ENCODE measurements at regions of chr10 and their contacts with region 1.

Region 1: DNA sequence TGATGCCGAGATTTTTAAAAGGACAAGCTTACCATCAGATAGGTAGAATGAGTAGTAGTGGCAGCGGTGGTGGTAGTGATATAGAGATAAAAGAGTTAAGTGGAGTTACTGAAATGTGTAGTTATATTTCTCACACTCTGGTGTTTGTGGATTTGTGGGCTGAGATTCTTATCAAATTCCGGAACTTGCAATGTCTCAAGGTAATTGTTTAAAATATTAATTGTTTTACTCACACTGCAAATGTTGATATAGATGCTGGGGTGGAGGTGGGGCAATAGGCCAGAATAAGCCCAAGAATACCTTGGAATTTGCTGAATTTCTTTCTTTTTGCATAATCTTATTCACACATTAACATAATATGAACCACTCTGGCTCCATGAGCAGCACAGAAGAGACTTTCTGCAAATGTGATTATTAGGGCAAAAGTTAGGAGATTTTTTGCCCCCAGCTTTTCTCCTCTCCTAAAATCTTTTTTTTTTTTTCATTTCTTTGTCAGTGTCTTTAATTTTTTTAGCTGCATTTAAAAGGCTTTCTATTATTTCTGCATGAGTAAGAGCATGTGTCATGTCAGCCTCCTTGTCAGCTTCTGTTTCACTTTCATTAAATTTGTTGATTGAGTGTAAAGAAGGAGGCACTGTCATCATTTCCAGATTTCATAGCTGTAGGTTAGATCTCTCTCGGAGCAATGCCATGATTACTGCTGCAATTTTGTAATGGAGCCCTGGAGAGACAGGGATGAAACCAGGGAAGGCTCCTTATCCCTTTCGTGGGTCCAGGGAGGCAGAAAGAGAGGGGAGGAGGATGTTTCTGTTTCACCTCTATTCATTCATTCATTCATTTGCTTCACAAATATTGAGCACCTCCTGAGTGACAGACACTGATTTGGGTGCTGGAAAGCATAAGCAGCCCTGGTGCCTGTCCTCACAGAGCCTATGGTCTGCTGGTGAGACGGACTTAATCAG is 13.1 kb upstream of the SGMS1 start:
- DNase-seq: peak; percentile 44
- H3K4me3 Mint-ChIP-seq: no peak overlapping the region
- H3K27ac Mint-ChIP-seq: peak overlapping the region; percentile 50
- H3K4me1 Mint-ChIP-seq: peaks cover 33% of the 10 kb centered on the region
- H3K27me3 Mint-ChIP-seq: peaks cover 34% of the 10 kb centered on the region

Region 2: DNA sequence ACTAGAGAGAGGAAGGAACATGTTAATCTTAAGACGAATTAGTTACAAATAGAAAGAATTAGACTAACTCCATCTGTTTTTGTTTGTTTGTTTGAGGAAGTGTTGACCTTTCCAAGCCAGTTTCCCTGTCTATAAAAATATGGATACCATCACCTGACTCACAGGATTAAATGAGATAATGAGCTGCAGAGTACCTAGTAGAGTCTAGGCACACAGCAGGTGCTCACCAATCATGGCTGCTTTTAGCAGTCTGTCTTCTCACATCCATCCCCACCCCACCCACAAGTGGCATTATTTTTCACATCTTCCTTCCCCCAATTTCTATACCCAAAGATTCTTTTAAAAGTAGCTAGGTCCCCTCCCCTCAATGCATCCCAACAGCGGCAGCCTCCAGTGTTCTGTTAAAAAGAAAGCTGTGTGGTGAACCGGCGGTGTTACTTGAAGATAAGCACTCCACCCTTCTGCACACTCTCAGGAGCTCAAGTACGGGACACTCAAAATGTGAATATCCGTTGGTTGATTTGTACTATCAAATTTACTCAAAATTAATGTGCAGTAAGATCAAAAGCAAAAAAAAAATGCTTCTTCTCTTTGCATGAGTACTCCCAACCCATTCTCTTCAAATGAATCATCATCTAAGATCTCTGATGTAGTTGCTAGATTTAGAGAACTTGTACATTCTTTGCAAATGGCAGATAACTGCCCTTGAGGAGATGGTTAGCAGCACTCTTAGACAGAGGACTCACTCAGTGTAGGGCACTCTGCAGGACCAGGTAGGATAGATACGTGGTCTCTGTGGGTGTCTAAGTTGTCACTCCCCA is 240.2 kb before region 1 on chr10:
- CTCF ChIA-PET with region 1: no interaction called
- POLR2A ChIA-PET with region 1: interaction called, 3 read pairs
- intact Hi-C with region 1: loop called (anchors 1 kb)
- DNase-seq: peak; percentile 51
- H3K4me3 Mint-ChIP-seq: peak overlapping the region; percentile 17
- H3K27ac Mint-ChIP-seq: peak overlapping the region; percentile 65
- H3K4me1 Mint-ChIP-seq: peaks cover 46% of the 10 kb centered on the region
- H3K27me3 Mint-ChIP-seq: no peaks in the 10 kb centered on the region

Region 3: GRCh38 chr10:50508315-50509051 is 128.4 kb before region 1 on chr10:
- CTCF ChIA-PET with region 1: interaction called, 3 read pairs
- POLR2A ChIA-PET with region 1: interaction called, 12 read pairs
- intact Hi-C with region 1: loop called (anchors 1 kb)
- DNase-seq: peak; percentile 79
- H3K4me3 Mint-ChIP-seq: no peak overlapping the region
- H3K27ac Mint-ChIP-seq: no peak overlapping the region
- H3K4me1 Mint-ChIP-seq: peaks cover 68% of the 10 kb centered on the region
- H3K27me3 Mint-ChIP-seq: peaks cover 5% of the 10 kb centered on the region

Region 4: GRCh38 chr10:50527442-50528043 is 109.4 kb before region 1 on chr10:
- CTCF ChIA-PET with region 1: no interaction called
- POLR2A ChIA-PET with region 1: no interaction called
- intact Hi-C with region 1: no loop called
- DNase-seq: no peak
- H3K4me3 Mint-ChIP-seq: no peak overlapping the region
- H3K27ac Mint-ChIP-seq: no peak overlapping the region
- H3K4me1 Mint-ChIP-seq: peaks cover 15% of the 10 kb centered on the region
- H3K27me3 Mint-ChIP-seq: no peaks in the 10 kb centered on the region

Region 5: GRCh38 chr10:50674469-50675254 is 37.8 kb after region 1 on chr10:
- CTCF ChIA-PET with region 1: no interaction called
- POLR2A ChIA-PET with region 1: no interaction called
- intact Hi-C with region 1: loop called (anchors 1 kb)
- DNase-seq: no peak
- H3K4me3 Mint-ChIP-seq: no peak overlapping the region
- H3K27ac Mint-ChIP-seq: no peak overlapping the region
- H3K4me1 Mint-ChIP-seq: peaks cover 15% of the 10 kb centered on the region
- H3K27me3 Mint-ChIP-seq: no peaks in the 10 kb centered on the region

Region 6: GRCh38 chr10:50927522-50928189 is 290.8 kb after region 1 on chr10:
- CTCF ChIA-PET with region 1: no interaction called
- POLR2A ChIA-PET with region 1: no interaction called
- intact Hi-C with region 1: no loop called
- DNase-seq: no peak
- H3K4me3 Mint-ChIP-seq: no peak overlapping the region
- H3K27ac Mint-ChIP-seq: no peak overlapping the region
- H3K4me1 Mint-ChIP-seq: no peaks in the 10 kb centered on the region
- H3K27me3 Mint-ChIP-seq: peaks cover 2% of the 10 kb centered on the region

Region 7: GRCh38 chr10:51186361-51186760 is 549.5 kb after region 1 on chr10:
- CTCF ChIA-PET with region 1: no interaction called
- POLR2A ChIA-PET with region 1: no interaction called
- intact Hi-C with region 1: no loop called
- DNase-seq: no peak
- H3K4me3 Mint-ChIP-seq: no peak overlapping the region
- H3K27ac Mint-ChIP-seq: no peak overlapping the region
- H3K4me1 Mint-ChIP-seq: no peaks in the 10 kb centered on the region
- H3K27me3 Mint-ChIP-seq: no peaks in the 10 kb centered on the region